Testis (tissue), 5 donors: ENCODE measurements at regions of chr10 and their contacts with region 1.

Region 1: GRCh38 chr10:20768843-20769242 is 128.3 kb downstream of the NEBL start:
- DNase-seq: no peak
- H3K4me3 ChIP-seq: no peak overlapping the region
- H3K27ac ChIP-seq: no peak overlapping the region
- H3K4me1 ChIP-seq: no peaks in the 10 kb centered on the region
- H3K27me3 ChIP-seq: no peaks in the 10 kb centered on the region
- CTCF ChIP-seq: peak; percentile 3 to 41 (median 34)
- POLR2A ChIP-seq: no peak

Region 2: GRCh38 chr10:19819419-19820033 is 949.3 kb before region 1 on chr10:
- intact Hi-C with region 1: loop called (anchors 10 kb)
- DNase-seq: peak; percentile 76
- H3K4me3 ChIP-seq: no peak overlapping the region
- H3K27ac ChIP-seq: peak overlapping the region in 1 of 2 donors; percentile 88
- H3K4me1 ChIP-seq: peaks cover 12% of the 10 kb centered on the region
- H3K27me3 ChIP-seq: no peaks in the 10 kb centered on the region
- CTCF ChIP-seq: peak; percentile 83 to 93 (median 86)
- POLR2A ChIP-seq: no peak

Region 3: GRCh38 chr10:20608503-20608902 is 160.3 kb before region 1 on chr10:
- intact Hi-C with region 1: no loop called
- DNase-seq: no peak
- H3K4me3 ChIP-seq: no peak overlapping the region
- H3K27ac ChIP-seq: no peak overlapping the region
- H3K4me1 ChIP-seq: no peaks in the 10 kb centered on the region
- H3K27me3 ChIP-seq: no peaks in the 10 kb centered on the region
- CTCF ChIP-seq: no peak
- POLR2A ChIP-seq: no peak

Region 4: GRCh38 chr10:20712774-20713173 is 56.1 kb before region 1 on chr10:
- intact Hi-C with region 1: no loop called
- DNase-seq: no peak
- H3K4me3 ChIP-seq: no peak overlapping the region
- H3K27ac ChIP-seq: no peak overlapping the region
- H3K4me1 ChIP-seq: no peaks in the 10 kb centered on the region
- H3K27me3 ChIP-seq: no peaks in the 10 kb centered on the region
- CTCF ChIP-seq: no peak
- POLR2A ChIP-seq: no peak

Region 5: GRCh38 chr10:20822825-20823224 is 54.0 kb after region 1 on chr10:
- intact Hi-C with region 1: no loop called
- DNase-seq: no peak
- H3K4me3 ChIP-seq: no peak overlapping the region
- H3K27ac ChIP-seq: no peak overlapping the region
- H3K4me1 ChIP-seq: no peaks in the 10 kb centered on the region
- H3K27me3 ChIP-seq: no peaks in the 10 kb centered on the region
- CTCF ChIP-seq: no peak
- POLR2A ChIP-seq: no peak

Region 6: GRCh38 chr10:20839141-20839540 is 70.3 kb after region 1 on chr10:
- intact Hi-C with region 1: no loop called
- DNase-seq: no peak
- H3K4me3 ChIP-seq: no peak overlapping the region
- H3K27ac ChIP-seq: no peak overlapping the region
- H3K4me1 ChIP-seq: no peaks in the 10 kb centered on the region
- H3K27me3 ChIP-seq: no peaks in the 10 kb centered on the region
- CTCF ChIP-seq: no peak
- POLR2A ChIP-seq: no peak